Psoas muscle (tissue), 8 donors: ENCODE measurements at regions of chr16 and their contacts with region 1.

Region 1: GRCh38 chr16:3983081-3983520 is 102.6 kb upstream of the CREBBP start:
- DNase-seq: peak; percentile 68 to 84
- ATAC-seq: peak; percentile 85 to 93 (median 92)
- H3K4me3 ChIP-seq: no peak overlapping the region
- H3K27ac ChIP-seq: peak overlapping the region; percentile 27
- H3K4me1 ChIP-seq: no peaks in the 10 kb centered on the region
- H3K27me3 ChIP-seq: no peaks in the 10 kb centered on the region
- CTCF ChIP-seq: peak; percentile 81

Region 2: GRCh38 chr16:3645504-3646347 is 337.4 kb before region 1 on chr16:
- intact Hi-C with region 1: no loop called
- DNase-seq: no peak
- ATAC-seq: peak; percentile 34 to 56 (median 44)
- H3K4me3 ChIP-seq: no peak overlapping the region
- H3K27ac ChIP-seq: peak overlapping the region; percentile 72
- H3K4me1 ChIP-seq: peaks cover 15% of the 10 kb centered on the region
- H3K27me3 ChIP-seq: no peaks in the 10 kb centered on the region
- CTCF ChIP-seq: no peak

Region 3: DNA sequence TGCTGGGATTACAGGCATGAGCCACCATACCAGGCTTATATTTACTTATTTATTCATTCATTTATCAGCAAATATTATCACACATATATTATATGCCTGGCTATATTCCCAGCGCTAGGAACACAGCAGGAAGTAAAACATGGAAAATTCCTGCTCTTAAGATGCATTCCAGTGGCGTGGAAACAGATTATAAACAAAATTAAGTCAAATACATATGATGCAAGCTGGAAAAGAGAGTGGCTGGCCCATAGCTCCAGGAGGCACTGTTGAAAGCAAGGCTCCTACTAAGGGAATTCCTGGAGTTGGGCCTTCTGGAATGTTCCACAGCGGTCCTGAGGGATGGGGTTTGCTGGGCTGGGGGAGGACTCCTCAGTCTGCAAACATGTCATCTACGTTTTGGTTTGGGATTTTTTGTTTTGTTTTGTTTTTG is 114.7 kb after region 1 on chr16:
- intact Hi-C with region 1: loop called in 1 of 2 experiments (anchors 5 kb)
- DNase-seq: no peak
- ATAC-seq: no peak
- H3K4me3 ChIP-seq: no peak overlapping the region
- H3K27ac ChIP-seq: peak overlapping the region; percentile 54
- H3K4me1 ChIP-seq: peaks cover 34% of the 10 kb centered on the region
- H3K27me3 ChIP-seq: no peaks in the 10 kb centered on the region
- CTCF ChIP-seq: no peak

Region 4: DNA sequence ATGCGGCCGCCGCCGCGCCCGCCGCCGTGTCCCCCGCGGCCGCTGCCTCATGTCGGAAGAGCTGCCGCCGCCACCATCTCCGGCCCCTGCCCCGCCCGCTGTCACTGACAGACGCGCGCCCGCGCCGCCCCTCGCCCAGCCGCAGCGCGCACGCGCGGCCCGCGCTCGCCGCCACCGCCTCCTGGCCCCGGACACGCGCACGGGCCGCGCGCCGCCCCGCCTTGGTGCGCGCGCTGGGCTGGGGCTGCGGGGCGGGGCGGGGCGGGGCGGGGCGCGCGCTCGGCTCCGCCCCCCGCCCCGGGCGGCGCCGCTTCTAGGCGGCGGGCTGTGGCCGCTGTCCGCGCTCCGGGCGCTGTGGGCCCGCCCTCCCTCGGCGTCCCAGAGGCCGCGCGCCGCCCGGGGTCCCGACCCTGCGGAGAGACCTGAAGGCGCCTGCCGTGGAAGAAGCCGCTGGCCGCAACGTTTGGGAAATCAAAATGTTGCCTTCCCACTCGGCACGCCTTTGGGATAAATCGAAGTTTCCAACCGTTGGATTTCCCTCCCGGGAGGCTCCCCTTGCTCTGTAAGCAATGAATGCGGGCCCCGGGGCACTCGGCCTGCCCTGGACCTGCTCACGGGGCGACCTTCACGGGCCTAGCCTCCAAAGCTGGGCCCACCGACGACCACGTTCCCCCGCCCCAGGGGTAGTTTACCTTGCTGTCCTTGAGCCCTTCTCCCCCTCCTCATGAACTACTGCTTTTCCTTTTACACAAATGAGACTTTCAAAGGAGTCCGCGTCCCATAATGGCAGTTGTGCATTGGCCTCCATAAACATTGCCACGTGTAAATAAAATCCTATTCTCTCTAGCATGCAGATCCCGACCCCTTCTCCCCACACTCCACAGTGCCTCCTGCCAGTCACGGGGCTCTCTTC is 133.5 kb after region 1 on chr16 and contains the start of gene ADCY9:
- intact Hi-C with region 1: loop called (anchors 5 kb)
- DNase-seq: peak; percentile 86 to 90
- ATAC-seq: peak; percentile 67 to 80 (median 75)
- H3K4me3 ChIP-seq: peak within 1 kb of the TSS; percentile 83
- H3K27ac ChIP-seq: peak within 1 kb of the TSS; percentile 91
- H3K4me1 ChIP-seq: peaks cover 34% of the 10 kb centered on the region
- H3K27me3 ChIP-seq: no peaks in the 10 kb centered on the region
- CTCF ChIP-seq: no peak
- total RNA-seq, gene ADCY9: 43.6 to 77.8 (median 51.9) TPM

Region 5: DNA sequence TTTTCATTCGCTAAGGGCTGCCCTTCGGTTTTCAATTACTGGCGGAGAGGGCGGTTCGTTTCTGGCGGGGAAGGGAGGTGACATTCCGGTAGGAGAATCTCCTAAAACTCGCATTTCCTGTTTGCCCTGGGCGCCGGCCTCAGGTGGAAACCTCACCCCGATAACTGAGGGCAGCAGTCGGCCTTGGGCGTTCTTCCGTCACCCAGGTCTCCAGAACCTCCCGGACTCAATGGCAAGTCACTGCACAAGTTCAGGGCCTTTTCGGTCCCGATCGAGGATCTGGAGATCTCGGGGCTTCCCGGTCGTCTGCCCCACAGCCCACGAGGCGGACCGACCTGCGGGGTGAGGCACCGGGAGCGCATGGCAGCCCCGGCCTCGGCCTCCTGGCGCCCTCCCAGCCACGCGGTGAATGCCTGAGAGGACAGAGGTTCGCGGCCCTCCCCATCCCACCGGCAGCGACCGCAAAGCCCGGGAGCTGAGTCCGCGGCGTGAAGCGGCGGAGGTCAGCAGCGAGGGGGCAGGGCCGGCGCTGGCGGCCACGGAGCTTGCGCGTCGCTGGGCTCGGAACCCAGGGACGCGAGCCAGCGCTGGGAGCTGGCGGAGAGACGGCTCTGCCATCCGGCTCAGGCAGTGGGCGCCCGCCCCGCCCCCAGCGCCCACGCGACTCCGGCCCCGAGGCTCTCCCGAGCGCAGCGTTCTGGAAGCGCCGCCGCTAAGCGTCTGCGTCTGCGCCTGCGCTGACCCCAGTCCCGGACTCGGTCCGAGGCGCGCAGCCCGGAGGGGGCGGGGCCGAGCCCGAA is 200.3 kb after region 1 on chr16:
- intact Hi-C with region 1: loop called in 1 of 2 experiments (anchors 5 kb)
- DNase-seq: peak; percentile 94 to 97
- ATAC-seq: peak; percentile 89 to 95 (median 90)
- H3K4me3 ChIP-seq: peak overlapping the region; percentile 81
- H3K27ac ChIP-seq: peak overlapping the region; percentile 90
- H3K4me1 ChIP-seq: no peaks in the 10 kb centered on the region
- H3K27me3 ChIP-seq: no peaks in the 10 kb centered on the region
- CTCF ChIP-seq: no peak

Region 6: GRCh38 chr16:4253394-4254150 is 270.5 kb after region 1 on chr16:
- intact Hi-C with region 1: loop called in 1 of 2 experiments (anchors 2 kb)
- DNase-seq: peak; percentile 100
- ATAC-seq: peak; percentile 93 to 96 (median 94)
- H3K4me3 ChIP-seq: peak overlapping the region; percentile 71
- H3K27ac ChIP-seq: peak overlapping the region; percentile 91
- H3K4me1 ChIP-seq: peaks cover 7% of the 10 kb centered on the region
- H3K27me3 ChIP-seq: no peaks in the 10 kb centered on the region
- CTCF ChIP-seq: no peak

Region 7: GRCh38 chr16:4330277-4330874 is 347.3 kb after region 1 on chr16:
- intact Hi-C with region 1: loop called (anchors 5 to 10 kb)
- DNase-seq: peak; percentile 87 to 93
- ATAC-seq: peak; percentile 80 to 87 (median 84)
- H3K4me3 ChIP-seq: no peak overlapping the region
- H3K27ac ChIP-seq: no peak overlapping the region
- H3K4me1 ChIP-seq: peaks cover 21% of the 10 kb centered on the region
- H3K27me3 ChIP-seq: no peaks in the 10 kb centered on the region
- CTCF ChIP-seq: peak; percentile 99